Tibial artery (tissue), 4 donors: ENCODE measurements at regions of chr13 and their contacts with region 1.

Region 1: DNA sequence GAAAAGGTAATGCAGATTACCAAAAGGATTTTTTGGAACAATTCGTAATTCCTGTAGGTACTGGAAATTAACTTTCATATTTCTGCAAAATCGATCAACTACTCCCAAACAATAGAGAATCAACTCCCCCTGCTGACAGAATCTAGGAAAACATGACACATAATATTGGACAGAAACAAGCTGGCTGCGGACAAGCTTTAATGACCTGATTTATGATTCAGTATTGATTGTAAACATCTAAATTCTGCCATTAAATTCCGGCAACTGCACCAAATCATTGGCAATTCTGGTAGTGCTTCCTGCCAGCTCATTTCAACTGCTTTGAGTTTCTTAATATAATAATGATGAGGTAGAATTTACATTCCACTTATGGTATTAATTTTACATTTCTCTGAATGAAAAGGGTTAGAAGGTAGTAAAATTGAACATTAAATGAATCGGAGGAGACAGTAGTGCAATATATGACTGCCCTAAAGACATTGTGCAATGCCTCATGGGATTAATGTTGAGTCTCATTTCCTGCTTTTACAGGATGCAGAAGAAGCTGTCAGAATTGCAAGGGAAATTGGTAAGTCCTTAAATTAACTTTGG is 146.5 kb downstream of the PCCA start:
- DNase-seq: no peak
- H3K4me3 ChIP-seq: no peak overlapping the region
- H3K27ac ChIP-seq: no peak overlapping the region
- H3K4me1 ChIP-seq: peaks cover 0 to 14% (median 0%) of the 10 kb centered on the region in 4 donors
- H3K27me3 ChIP-seq: no peaks in the 10 kb centered on the region
- CTCF ChIP-seq: peak; percentile 49 to 59

Region 2: DNA sequence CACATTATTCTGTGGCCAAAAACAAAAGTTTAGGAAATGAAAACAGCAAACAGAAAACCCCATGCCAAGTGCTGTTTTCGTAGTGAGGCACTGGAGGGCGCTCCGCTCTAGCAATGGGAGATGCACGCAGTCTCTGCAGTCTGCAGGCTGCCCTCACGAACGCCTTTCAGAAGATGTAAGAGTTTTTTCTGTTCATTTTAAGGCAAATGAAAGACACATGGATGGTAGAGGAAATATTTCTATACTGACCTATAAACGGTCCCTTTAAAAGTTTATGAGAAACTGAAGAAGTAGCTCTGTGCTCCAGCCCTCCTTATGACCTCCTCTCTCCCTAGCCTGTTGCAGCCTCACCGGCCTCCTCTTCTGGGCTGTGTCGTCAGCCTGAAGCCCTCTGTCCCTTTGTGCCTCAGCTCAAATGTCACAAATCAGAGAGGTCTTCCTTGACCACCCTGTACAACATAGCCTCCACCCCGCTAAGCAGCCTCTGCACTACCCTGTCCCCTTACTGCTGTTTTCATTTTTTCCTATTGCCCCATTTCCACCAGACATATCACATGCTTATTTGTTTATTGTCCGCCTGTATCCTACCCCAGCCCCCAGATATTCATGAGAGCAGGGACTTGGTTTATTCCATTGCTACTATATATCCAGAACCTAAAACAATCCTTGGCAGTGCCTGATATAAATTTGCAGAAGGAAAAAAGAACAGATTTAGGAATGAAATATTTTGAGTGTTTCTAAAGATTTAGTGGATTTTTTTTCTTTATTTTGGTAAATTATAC is 617.7 kb before region 1 on chr13:
- intact Hi-C with region 1: loop called (anchors 10 kb)
- DNase-seq: peak; percentile 46 to 76
- H3K4me3 ChIP-seq: no peak overlapping the region
- H3K27ac ChIP-seq: peak overlapping the region in 1 of 2 donors; percentile 54
- H3K4me1 ChIP-seq: peaks cover 0 to 37% (median 18%) of the 10 kb centered on the region in 4 donors
- H3K27me3 ChIP-seq: no peaks in the 10 kb centered on the region
- CTCF ChIP-seq: peak; percentile 78 to 85